Activated CD8-positive, alpha-beta T cell treated with anti-CD3 and anti-CD28 coated beads, Interleukin-2, amount 10 ng/mL, durations not matched to agents 7 days and 5 days (primary cell): ENCODE measurements at regions of chr17 and their contacts with region 1.

Region 1: DNA sequence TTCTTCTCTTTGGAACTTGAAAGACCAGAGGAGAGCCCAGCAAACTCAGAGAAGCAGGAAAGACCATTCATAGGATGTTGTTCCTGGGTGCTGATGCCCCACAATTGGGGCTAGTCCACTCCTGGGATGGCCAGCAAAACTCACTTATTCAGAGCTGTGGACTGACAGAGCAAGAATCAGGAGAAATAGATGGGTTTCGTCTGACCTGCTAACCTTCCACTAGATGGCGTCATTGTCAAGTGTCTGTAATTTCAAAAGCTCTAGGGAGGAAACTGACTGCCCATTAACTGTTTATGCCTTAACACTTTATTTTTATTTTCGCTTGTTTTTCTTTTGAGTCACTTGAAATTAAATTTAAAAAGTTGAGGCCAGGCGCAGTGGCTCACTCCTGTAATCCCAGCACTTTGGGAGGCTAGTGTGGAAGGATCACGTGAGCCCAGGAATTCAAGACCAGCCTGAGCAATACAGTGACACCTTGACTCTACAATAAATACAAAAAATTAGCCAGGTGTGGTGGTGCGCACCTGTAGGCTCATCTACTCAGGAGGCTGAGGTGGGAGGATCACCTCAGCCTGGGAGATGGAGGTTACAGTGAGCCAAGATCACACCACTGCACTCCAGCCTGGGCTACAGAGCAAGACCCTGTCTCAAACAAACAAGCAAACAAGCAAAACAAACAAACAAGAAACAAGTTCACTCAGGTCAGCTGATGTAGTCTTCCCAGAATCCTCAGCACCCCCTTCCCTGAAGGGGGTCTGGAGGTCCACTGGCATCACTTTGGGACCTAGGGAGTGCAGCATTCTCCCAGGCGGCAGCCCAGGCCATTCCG is 28.6 kb upstream of the MILR1 start:
- DNase-seq: peak; percentile 63
- ATAC-seq: peak; percentile 86
- H3K4me3 Mint-ChIP-seq: no peak overlapping the region
- H3K27ac Mint-ChIP-seq: no peak overlapping the region
- H3K4me1 Mint-ChIP-seq: peaks cover 14% of the 10 kb centered on the region
- H3K27me3 Mint-ChIP-seq: peaks cover 3% of the 10 kb centered on the region

Region 2: GRCh38 chr17:64297467-64298098 is 122.8 kb before region 1 on chr17:
- CTCF ChIA-PET with region 1: interaction called, 47 read pairs
- POLR2A ChIA-PET with region 1: no interaction called
- DNase-seq: no peak
- ATAC-seq: no peak
- H3K4me3 Mint-ChIP-seq: no peak overlapping the region
- H3K27ac Mint-ChIP-seq: no peak overlapping the region
- H3K4me1 Mint-ChIP-seq: no peaks in the 10 kb centered on the region
- H3K27me3 Mint-ChIP-seq: peaks cover 6% of the 10 kb centered on the region

Region 3: DNA sequence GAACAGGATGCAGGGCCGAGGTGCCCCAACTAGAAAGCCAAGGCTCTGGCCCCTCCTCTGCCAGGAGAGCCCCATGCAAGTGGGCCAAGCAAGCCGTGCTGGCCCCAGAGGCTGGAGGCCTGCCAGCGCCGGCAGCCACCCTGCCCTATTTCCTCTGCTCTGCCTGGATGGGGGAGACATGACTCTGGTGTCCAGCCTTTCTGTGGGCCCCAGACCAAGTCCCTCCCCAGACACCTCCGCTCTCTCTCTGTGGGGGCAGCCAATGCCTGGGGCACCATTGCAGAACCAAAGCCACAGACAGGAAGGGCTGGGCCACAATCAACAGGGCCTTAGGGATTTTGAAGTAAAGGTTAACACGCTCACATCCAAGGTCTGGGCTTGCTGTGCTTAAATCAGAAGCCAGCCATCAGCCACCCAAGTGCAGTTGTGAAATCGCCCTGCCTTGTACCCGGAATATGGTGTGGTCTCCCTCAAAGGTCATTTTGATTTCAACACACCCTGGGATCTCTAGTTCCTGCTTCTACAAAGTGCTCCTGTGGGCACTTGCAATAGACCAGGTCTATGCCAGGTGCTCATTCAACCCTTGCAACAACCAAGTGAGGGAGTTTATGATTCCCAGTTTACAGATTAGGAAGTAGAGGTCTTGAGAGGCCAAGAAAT is 93.8 kb before region 1 on chr17:
- CTCF ChIA-PET with region 1: interaction called, 131 read pairs
- POLR2A ChIA-PET with region 1: no interaction called
- DNase-seq: no peak
- ATAC-seq: no peak
- H3K4me3 Mint-ChIP-seq: no peak overlapping the region
- H3K27ac Mint-ChIP-seq: peak overlapping the region; percentile 73
- H3K4me1 Mint-ChIP-seq: peaks cover 5% of the 10 kb centered on the region
- H3K27me3 Mint-ChIP-seq: no peaks in the 10 kb centered on the region

Region 4: GRCh38 chr17:64393000-64393402 is 27.4 kb before region 1 on chr17:
- CTCF ChIA-PET with region 1: interaction called, 52 read pairs
- POLR2A ChIA-PET with region 1: no interaction called
- DNase-seq: peak; percentile 64
- ATAC-seq: peak; percentile 52
- H3K4me3 Mint-ChIP-seq: peak overlapping the region; percentile 88
- H3K27ac Mint-ChIP-seq: peak overlapping the region; percentile 95
- H3K4me1 Mint-ChIP-seq: peaks cover 71% of the 10 kb centered on the region
- H3K27me3 Mint-ChIP-seq: no peaks in the 10 kb centered on the region

Region 5: GRCh38 chr17:64459284-64459747 is 39.0 kb after region 1 on chr17:
- CTCF ChIA-PET with region 1: interaction called, 12 read pairs
- POLR2A ChIA-PET with region 1: no interaction called
- DNase-seq: no peak
- ATAC-seq: no peak
- H3K4me3 Mint-ChIP-seq: no peak overlapping the region
- H3K27ac Mint-ChIP-seq: no peak overlapping the region
- H3K4me1 Mint-ChIP-seq: peaks cover 24% of the 10 kb centered on the region
- H3K27me3 Mint-ChIP-seq: no peaks in the 10 kb centered on the region

Region 6: DNA sequence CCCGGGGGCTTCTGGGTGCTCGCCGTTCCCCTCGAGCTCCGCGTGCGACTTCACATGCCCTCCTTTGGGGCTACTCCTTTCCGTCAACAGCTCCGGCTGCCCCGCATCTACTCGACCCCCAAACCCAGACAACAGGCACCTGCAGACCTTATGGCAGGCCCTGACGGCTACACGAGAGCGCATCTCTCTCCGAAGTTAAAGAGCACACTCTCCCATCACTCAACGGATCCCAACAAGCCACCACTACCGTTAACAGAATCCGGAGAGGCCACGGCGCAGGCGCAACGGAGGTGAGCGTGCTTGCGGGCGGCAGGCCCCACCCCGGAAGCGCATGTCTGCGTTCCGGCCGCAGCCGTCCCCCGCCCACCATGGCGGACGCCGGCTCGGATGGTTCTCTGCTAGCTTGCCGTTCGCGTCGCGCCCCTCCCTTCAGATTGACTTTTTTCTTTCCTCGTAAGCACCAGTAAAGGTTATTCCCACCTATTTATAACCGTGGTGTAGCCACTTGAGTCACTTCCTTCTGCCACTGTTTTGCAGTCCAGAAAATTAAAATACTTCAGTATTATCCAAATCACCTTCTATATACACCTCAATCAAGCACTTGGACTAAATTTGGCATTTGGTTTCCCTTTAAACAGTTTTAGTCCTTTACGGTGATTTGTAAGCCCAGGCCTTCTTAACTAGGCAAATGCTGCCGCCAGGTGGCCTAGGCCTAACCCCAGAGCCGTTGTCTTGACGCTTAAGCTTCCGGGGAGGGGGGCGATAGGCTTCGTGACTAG is 76.6 kb after region 1 on chr17 and contains the start of gene POLG2:
- CTCF ChIA-PET with region 1: interaction called, 492 read pairs
- POLR2A ChIA-PET with region 1: interaction called, 16 read pairs
- DNase-seq: peak; percentile 97
- ATAC-seq: peak; percentile 80
- H3K4me3 Mint-ChIP-seq: peak within 1 kb of the TSS; percentile 94
- H3K27ac Mint-ChIP-seq: peak within 1 kb of the TSS; percentile 98
- H3K4me1 Mint-ChIP-seq: peaks cover 77% of the 10 kb centered on the region
- H3K27me3 Mint-ChIP-seq: no peaks in the 10 kb centered on the region
- total RNA-seq, gene POLG2: 31.3 to 33.7 TPM

Region 7: GRCh38 chr17:64736804-64737492 is 316.6 kb after region 1 on chr17:
- CTCF ChIA-PET with region 1: interaction called, 10 read pairs
- POLR2A ChIA-PET with region 1: no interaction called
- DNase-seq: peak; percentile 77
- ATAC-seq: peak; percentile 84
- H3K4me3 Mint-ChIP-seq: no peak overlapping the region
- H3K27ac Mint-ChIP-seq: no peak overlapping the region
- H3K4me1 Mint-ChIP-seq: peaks cover 32% of the 10 kb centered on the region
- H3K27me3 Mint-ChIP-seq: no peaks in the 10 kb centered on the region